K562 (cell line): ENCODE measurements at regions of chr3 and their contacts with region 1.

Region 1: GRCh38 chr3:40337136-40338108 is 27.9 kb downstream of the EIF1B start:
- DNase-seq: peak; percentile 37 to 61 (median 51)
- ATAC-seq: peak; percentile 91
- H3K4me3 ChIP-seq: no peak overlapping the region
- H3K27ac ChIP-seq: peak overlapping the region; percentile 61
- H3K4me1 ChIP-seq: peaks cover 5 to 21% of the 10 kb centered on the region in 2 experiments; a peak in 4 of 5 replicates
- H3K27me3 ChIP-seq: no peaks in the 10 kb centered on the region
- CTCF ChIP-seq: no peak
- EP300 ChIP-seq: peak; percentile 45; the same call in 1 of the 2 replicates
- POLR2A ChIP-seq: no peak
- RAD21 ChIP-seq: 0 out of 4 replicates have a peak, but pooled peaks of 1 of the 2 experiments have one; percentile 9

Region 2: DNA sequence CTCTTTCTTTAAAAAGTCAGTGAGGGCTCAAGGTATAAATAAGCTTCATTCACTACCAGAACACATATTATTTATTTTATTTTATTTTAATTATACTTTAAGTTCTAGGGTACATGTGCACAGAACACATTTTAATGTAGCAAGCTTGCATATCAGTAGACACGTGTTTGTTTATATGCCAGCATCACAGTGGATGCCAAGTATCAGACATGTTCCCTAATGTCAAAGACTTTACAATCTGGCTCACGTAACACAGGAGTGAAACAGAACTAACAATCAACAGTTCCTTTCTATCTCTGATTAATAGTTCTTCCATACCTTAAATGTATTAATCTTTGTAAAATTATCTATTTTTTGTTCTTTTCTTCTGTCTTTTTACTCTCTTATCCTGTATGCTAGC is 26.3 kb after region 1 on chr3:
- CTCF ChIA-PET with region 1: no interaction called
- POLR2A ChIA-PET with region 1: no interaction called
- in situ Hi-C with region 1: no loop called
- intact Hi-C with region 1: loop called (anchors 2 kb)
- DNase-seq: no peak
- ATAC-seq: no peak
- H3K4me3 ChIP-seq: no peak overlapping the region
- H3K27ac ChIP-seq: no peak overlapping the region
- H3K4me1 ChIP-seq: peaks cover 27 to 30% of the 10 kb centered on the region in 2 experiments
- H3K27me3 ChIP-seq: no peaks in the 10 kb centered on the region
- CTCF ChIP-seq: no peak
- EP300 ChIP-seq: no peak
- POLR2A ChIP-seq: no peak
- RAD21 ChIP-seq: no peak

Region 3: DNA sequence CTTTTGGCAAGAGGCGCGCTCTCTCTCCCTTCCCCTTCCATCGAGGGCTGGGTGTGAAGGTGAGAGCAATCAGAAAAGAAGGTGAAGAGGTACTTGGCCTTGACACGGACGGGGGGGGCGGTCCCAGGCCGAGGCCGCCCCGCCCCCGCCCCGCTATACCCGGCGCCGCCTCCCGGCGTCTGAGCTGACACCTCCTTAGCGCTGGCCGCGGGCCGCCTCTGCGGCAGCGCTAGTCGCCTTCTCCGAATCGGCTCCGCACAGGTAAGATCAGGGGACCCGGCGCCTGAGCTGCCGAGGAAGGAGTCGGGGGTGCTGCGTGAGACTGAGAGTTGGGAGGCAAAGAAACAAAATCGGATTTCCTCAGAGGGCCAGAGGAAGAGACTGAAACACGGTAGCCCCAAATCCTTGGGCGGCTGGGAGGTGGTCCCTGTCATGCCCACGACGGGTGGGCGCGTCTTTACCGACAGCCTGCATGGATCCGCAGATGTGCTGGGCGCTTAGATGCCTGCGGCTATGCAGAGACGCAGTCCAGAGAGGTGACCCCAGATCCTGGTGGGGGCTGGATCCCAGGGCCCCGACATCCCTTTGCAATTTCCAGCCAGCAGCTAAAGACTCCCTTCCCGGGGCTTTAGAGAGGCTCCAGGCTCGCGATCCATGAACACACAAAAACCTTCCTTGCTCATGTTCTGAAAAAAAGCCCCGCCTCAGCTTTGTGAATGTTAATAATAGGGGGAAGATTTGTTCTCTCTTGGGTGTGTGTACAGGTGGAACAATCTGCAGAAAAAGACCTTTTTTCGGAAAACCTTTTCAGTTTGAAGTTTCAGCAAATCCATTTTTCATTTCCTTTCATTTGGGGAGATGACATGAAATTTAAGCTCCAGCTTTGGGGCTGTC is 49.8 kb after region 1 on chr3 and contains the start of gene ENTPD3:
- CTCF ChIA-PET with region 1: no interaction called
- POLR2A ChIA-PET with region 1: no interaction called
- in situ Hi-C with region 1: no loop called
- intact Hi-C with region 1: no loop called
- DNase-seq: peak; percentile 82 to 90 (median 86)
- ATAC-seq: peak; percentile 94
- H3K4me3 ChIP-seq: peak within 1 kb of the TSS; percentile 35
- H3K27ac ChIP-seq: no peak within 1 kb of the TSS
- H3K4me1 ChIP-seq: peaks cover 20 to 26% of the 10 kb centered on the region in 2 experiments; a peak in 4 of 5 replicates
- H3K27me3 ChIP-seq: no peaks in the 10 kb centered on the region
- CTCF ChIP-seq: peak in 2 of 3 experiments; percentile 12 to 30; a peak in 1 of 6 replicates
- EP300 ChIP-seq: no peak
- POLR2A ChIP-seq: no peak
- RAD21 ChIP-seq: no peak
- polyA plus RNA-seq, gene ENTPD3: 0.56 to 0.73 TPM

Region 4: DNA sequence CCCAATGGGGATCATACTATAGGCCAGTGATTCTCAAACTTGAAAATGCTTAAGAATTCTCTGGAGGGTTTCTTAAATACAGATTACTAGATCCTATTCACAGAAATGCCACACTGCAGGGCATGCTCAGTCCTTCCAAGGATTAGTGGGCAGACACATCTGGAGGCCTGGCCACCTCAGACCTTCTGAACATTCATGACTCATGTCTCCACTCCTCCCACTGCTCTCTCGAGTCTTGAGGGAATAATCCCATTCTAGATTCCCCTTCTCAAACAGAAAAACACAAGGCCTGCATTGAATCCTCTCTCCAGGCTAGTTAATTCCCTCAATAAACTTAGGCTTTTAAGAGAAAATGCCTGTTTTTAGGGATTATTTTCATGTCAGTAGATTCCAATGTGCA is 209.4 kb after region 1 on chr3:
- CTCF ChIA-PET with region 1: no interaction called
- POLR2A ChIA-PET with region 1: no interaction called
- in situ Hi-C with region 1: no loop called
- intact Hi-C with region 1: no loop called
- DNase-seq: peak in 1 of 4 experiments; percentile 35
- ATAC-seq: peak; percentile 72
- H3K4me3 ChIP-seq: no peak overlapping the region
- H3K27ac ChIP-seq: no peak overlapping the region
- H3K4me1 ChIP-seq: no peaks in the 10 kb centered on the region; a peak in 1 of 5 replicates
- H3K27me3 ChIP-seq: no peaks in the 10 kb centered on the region
- CTCF ChIP-seq: no peak
- EP300 ChIP-seq: no peak
- POLR2A ChIP-seq: no peak
- RAD21 ChIP-seq: no peak